ENCODE measurements at regions of chr15 and their contacts with region 1.

Region 1: DNA sequence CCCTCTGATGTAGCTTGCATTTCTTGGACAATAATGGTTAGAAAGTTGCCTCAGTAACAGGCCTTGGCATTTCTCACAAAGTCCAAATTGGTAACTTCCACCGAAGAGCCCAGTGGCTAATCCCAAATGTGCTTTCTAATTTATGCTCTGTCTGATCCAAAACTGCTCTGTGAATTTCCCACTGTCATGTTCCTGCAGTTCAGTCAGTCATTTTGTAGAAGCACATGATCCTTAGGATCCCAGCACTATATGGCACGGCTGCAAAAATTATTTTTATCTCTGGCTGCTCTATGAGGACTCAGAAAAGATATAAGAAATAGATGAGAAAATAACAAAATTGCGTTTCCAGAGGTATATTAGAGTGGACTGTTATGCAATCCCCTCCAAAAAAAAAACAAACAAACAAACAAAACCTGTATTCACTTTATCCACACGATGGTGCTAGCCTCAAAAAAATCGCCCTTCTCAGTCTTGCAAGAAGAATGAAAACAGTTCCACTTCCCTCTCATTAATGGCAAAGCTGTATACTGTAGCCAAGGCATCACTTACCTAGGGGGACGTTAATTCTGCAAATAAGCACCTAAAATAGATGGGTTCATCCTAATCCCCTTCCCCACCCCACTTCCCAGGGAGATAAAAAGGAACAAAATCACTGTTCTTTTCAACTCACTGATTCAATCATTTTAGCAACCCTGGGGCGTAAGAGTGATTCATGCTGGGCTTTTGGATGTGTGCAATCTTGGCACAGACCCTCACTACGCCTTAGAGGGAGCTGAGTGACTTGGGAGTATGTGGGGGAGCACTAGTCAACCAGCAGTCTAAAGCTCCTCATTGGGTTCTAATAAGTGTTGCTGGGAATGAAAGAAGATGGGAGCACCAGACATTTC is 61.3 kb downstream of the TMCO5A start:
- DNase-seq: peak in 1 of 5 donors; percentile 25
- ATAC-seq: peak; percentile 69 to 85 (median 77)
- H3K4me3 ChIP-seq: no peak overlapping the region
- H3K27ac ChIP-seq: no peak overlapping the region
- H3K4me1 ChIP-seq: peaks cover 0 to 11% (median 0%) of the 10 kb centered on the region in 12 donors
- H3K27me3 ChIP-seq: no peaks in the 10 kb centered on the region
- CTCF ChIP-seq: peak; percentile 51 to 78 (median 66)
- POLR2A ChIP-seq: no peak

Region 2: DNA sequence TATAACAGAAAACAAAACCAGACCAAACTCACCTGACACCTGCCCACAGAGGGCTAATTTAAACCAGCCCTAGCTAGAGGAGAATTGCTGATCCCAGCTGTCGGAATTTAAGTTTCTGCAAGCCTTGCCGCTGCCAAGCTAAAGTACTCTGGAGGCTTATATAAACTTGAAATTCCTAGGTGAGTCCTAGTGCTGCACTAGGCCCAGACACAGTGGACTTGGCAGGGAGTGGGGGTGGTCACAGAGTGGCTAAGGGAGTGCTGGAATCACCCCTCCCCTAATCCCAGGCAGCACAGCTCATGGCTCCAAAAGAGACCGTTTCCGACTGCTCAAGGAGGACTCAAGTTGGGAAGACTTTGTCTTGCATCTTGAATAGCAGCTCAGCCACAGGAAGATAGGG is 43.7 kb before region 1 on chr15:
- intact Hi-C with region 1: no loop called
- DNase-seq: no peak
- ATAC-seq: no peak
- H3K4me3 ChIP-seq: no peak overlapping the region
- H3K27ac ChIP-seq: no peak overlapping the region
- H3K4me1 ChIP-seq: no peaks in the 10 kb centered on the region
- H3K27me3 ChIP-seq: peaks cover 0 to 12% (median 0%) of the 10 kb centered on the region in 9 donors
- CTCF ChIP-seq: no peak
- POLR2A ChIP-seq: no peak

Region 3: DNA sequence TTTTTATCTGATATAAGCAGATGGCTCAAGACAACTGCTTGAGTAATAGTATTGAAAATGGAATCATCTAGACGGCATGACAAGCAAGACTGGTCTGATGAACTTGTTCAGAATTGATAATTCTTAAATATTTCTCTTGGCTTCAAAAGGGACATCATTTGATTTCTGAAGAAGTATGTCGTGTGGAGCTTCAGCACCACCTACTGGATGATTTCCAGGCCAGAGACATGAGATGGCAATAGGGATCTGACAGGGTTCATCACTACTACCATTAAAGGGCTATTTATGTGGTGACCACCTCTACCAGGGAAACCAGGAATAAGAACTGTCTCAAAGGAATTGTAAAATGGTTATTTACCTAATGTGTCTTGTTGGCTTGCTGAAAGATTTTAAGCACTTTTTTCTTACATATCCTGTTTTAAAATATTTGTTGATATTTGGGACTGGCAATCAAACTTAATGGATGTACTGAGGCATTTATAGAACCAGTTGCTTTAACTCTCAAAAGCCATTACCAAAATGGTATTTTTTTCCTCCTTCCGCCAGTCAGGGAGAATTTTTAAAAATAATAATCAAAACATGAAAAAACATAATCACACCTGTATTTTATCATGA is 358.7 kb after region 1 on chr15:
- intact Hi-C with region 1: loop called (anchors 1 to 5 kb)
- DNase-seq: peak in 4 of 5 donors; percentile 43 to 61 (median 58)
- ATAC-seq: peak; percentile 37 to 72 (median 61)
- H3K4me3 ChIP-seq: no peak overlapping the region
- H3K27ac ChIP-seq: no peak overlapping the region
- H3K4me1 ChIP-seq: peaks cover 0 to 11% (median 0%) of the 10 kb centered on the region in 12 donors
- H3K27me3 ChIP-seq: no peaks in the 10 kb centered on the region
- CTCF ChIP-seq: peak; percentile 66 to 92 (median 81)
- POLR2A ChIP-seq: no peak

Region 4: GRCh38 chr15:38389924-38390542 is 394.3 kb after region 1 on chr15:
- intact Hi-C with region 1: loop called in 6 of 10 experiments (anchors 5 to 10 kb)
- DNase-seq: peak in 4 of 5 donors; percentile 36 to 64 (median 54)
- ATAC-seq: peak in 2 of 4 donors; percentile 56 to 63
- H3K4me3 ChIP-seq: no peak overlapping the region
- H3K27ac ChIP-seq: no peak overlapping the region
- H3K4me1 ChIP-seq: no peaks in the 10 kb centered on the region
- H3K27me3 ChIP-seq: no peaks in the 10 kb centered on the region
- CTCF ChIP-seq: peak; percentile 66 to 88 (median 77)
- POLR2A ChIP-seq: no peak

Region 5: DNA sequence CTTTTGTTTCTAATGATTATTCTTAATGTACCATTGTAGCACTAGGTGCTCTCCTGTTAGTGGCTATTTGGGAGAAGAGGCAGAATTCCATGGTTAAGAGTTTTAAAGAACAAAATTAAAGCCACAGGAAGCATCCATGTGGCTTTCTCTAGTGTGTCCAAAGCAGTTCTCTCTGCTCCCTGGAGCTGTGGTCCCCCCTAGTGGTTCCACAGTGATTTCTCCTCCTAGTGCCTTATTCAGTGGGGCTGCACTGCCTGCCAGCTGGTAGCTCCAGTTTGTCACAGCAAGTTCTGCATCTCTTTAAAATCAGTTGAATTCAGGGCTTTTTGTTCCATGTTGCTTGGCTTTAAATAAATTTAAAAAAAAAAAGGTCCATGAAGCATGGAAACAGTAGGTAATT is 418.7 kb after region 1 on chr15:
- intact Hi-C with region 1: loop called in 9 of 10 experiments (anchors 2 to 10 kb)
- DNase-seq: peak; percentile 56 to 69 (median 63)
- ATAC-seq: peak in 3 of 4 donors; percentile 88 to 95 (median 88)
- H3K4me3 ChIP-seq: no peak overlapping the region
- H3K27ac ChIP-seq: no peak overlapping the region
- H3K4me1 ChIP-seq: peaks cover 0 to 20% (median 0%) of the 10 kb centered on the region in 12 donors
- H3K27me3 ChIP-seq: no peaks in the 10 kb centered on the region
- CTCF ChIP-seq: peak; percentile 52 to 74 (median 63)
- POLR2A ChIP-seq: no peak

Region 6: DNA sequence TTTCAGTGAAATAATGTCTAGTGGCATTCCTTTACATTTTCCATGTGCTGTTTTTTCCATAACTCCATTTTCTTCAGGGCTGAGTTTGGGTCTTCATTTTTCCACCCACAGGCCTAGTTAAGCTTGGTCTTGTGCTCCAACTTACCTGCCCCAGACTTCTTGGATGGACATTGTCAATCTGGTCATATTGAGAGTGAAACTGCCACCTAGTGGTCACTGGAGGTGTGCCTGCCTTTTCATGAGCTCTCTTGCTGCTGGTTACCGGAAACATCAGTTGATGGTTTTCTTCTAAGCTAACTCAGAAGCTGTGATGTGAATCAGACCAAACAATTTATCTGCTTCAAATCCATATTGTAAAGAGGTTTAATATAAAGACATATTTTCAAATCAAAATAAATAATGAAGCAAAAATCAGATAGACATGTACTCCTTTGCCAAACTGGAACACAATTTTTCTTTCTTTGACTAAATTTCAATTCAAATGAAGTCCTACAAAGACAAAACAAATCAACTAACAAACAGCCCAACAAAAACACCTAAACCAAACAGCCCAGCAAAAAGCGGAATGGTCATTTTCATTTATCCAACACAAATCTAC is 704.0 kb after region 1 on chr15:
- intact Hi-C with region 1: loop called in 3 of 10 experiments (anchors 10 kb)
- DNase-seq: peak in 3 of 5 donors; percentile 24 to 43 (median 34)
- ATAC-seq: peak in 2 of 4 donors; percentile 25 to 43
- H3K4me3 ChIP-seq: no peak overlapping the region
- H3K27ac ChIP-seq: no peak overlapping the region
- H3K4me1 ChIP-seq: peaks cover 0 to 15% (median 0%) of the 10 kb centered on the region in 12 donors
- H3K27me3 ChIP-seq: peaks cover 0 to 3% (median 0%) of the 10 kb centered on the region in 9 donors
- CTCF ChIP-seq: peak; percentile 68 to 90 (median 78)
- POLR2A ChIP-seq: no peak

Measured in heart left ventricle (tissue), 16 donors.